Activated CD8-positive, alpha-beta T cell treated with anti-CD3 and anti-CD28 coated beads for 36 hours (primary cell): ENCODE measurements at regions of chr6 and their contacts with region 1.

Region 1: DNA sequence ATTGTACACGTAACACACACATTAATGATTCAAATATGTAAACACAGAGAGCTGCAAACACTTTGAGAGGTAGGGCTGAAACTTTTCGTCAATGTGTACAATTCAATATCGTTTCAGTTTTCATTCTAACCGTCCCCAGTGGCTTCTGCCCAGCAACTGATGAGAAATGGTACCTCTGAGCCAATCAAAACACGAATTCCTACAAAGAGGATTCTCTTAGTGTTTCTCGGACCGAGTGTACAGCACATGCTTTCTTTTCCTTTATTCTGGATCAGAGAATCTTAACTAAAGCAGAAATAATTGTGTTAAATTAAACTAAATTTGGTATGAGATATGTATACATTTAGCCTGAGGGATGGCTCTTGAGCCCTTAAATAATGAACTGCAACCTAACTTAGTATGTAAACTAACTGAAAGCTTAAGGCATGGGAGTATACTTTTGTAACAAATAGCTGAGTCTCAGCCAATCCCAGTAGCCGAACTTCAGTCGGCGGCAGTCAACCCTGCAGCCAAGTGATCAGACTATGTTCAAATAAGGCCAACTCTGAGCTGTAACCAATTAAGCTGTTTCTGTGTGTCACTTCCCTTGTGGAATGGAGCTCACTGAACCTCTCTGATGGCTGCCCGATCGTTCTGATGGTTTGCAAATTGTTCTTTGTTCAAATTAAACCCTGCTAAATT is 16.1 kb downstream of the BTN2A1 start:
- DNase-seq: peak; percentile 88
- ATAC-seq: peak; percentile 91
- H3K4me3 Mint-ChIP-seq: peak overlapping the region; percentile 100
- H3K27ac Mint-ChIP-seq: peak overlapping the region; percentile 100
- H3K4me1 Mint-ChIP-seq: peaks cover 38% of the 10 kb centered on the region
- H3K27me3 Mint-ChIP-seq: no peaks in the 10 kb centered on the region
- CTCF ChIP-seq: no peak

Region 2: GRCh38 chr6:25913741-25914140 is 560.2 kb before region 1 on chr6:
- CTCF ChIA-PET with region 1: no interaction called
- POLR2A ChIA-PET with region 1: no interaction called
- intact Hi-C with region 1: no loop called
- DNase-seq: no peak
- ATAC-seq: no peak
- H3K4me3 Mint-ChIP-seq: no peak overlapping the region
- H3K27ac Mint-ChIP-seq: no peak overlapping the region
- H3K4me1 Mint-ChIP-seq: peaks cover 14% of the 10 kb centered on the region
- H3K27me3 Mint-ChIP-seq: peaks cover 2% of the 10 kb centered on the region
- CTCF ChIP-seq: no peak

Region 3: DNA sequence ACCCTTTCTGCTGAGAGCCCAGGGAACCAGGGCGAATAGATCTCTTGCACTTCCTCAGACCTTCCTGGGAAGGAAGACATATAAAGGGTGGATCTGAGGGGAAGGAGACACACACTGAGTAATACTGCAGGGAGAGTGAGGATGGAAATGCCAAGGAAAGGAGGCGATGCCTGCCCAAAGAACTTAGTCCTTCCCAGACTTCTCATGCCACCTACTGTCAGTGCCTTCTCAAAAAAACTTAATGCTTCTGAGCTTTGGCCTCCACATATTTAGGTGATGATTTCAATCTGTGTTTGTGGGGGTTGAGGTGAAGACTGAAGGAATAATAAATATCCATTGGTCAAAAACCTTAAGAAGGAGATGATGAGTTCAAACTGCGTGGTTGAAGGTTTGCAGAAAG is 62.1 kb before region 1 on chr6:
- CTCF ChIA-PET with region 1: no interaction called
- POLR2A ChIA-PET with region 1: no interaction called
- intact Hi-C with region 1: no loop called
- DNase-seq: no peak
- ATAC-seq: no peak
- H3K4me3 Mint-ChIP-seq: no peak overlapping the region
- H3K27ac Mint-ChIP-seq: peak overlapping the region; percentile 23
- H3K4me1 Mint-ChIP-seq: peaks cover 20% of the 10 kb centered on the region
- H3K27me3 Mint-ChIP-seq: no peaks in the 10 kb centered on the region
- CTCF ChIP-seq: no peak

Region 4: GRCh38 chr6:26485112-26485780 is 11.3 kb after region 1 on chr6:
- CTCF ChIA-PET with region 1: interaction called, 7 read pairs
- POLR2A ChIA-PET with region 1: interaction called, 12 read pairs
- intact Hi-C with region 1: no loop called
- DNase-seq: no peak
- ATAC-seq: no peak
- H3K4me3 Mint-ChIP-seq: no peak overlapping the region
- H3K27ac Mint-ChIP-seq: no peak overlapping the region
- H3K4me1 Mint-ChIP-seq: no peaks in the 10 kb centered on the region
- H3K27me3 Mint-ChIP-seq: no peaks in the 10 kb centered on the region
- CTCF ChIP-seq: no peak

Region 5: GRCh38 chr6:26532699-26533531 is 59.0 kb after region 1 on chr6:
- CTCF ChIA-PET with region 1: no interaction called
- POLR2A ChIA-PET with region 1: interaction called, 9 read pairs
- intact Hi-C with region 1: loop called (anchors 5 kb)
- DNase-seq: peak; percentile 97
- ATAC-seq: peak; percentile 41
- H3K4me3 Mint-ChIP-seq: peak overlapping the region; percentile 86
- H3K27ac Mint-ChIP-seq: peak overlapping the region; percentile 88
- H3K4me1 Mint-ChIP-seq: peaks cover 42% of the 10 kb centered on the region
- H3K27me3 Mint-ChIP-seq: peaks cover 1% of the 10 kb centered on the region
- CTCF ChIP-seq: no peak

Region 6: DNA sequence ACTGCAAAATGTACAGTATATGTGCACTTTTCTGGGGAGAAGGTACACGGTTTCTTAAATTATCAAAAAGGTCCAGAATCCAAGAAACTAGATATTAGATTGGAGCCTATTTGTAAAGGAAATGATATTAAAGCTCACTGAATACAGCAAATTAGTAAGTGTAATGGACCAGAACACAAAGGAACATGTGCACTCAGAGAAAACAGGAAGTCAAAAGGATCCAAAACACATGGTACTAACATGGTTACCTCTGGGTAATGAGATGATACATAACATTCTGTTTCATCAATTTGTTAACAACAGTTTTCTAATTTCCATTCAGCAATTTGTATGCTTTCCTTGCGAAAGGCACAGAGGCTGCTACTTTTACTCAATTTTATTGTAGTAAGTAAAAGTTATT is 166.9 kb after region 1 on chr6:
- CTCF ChIA-PET with region 1: no interaction called
- POLR2A ChIA-PET with region 1: no interaction called
- intact Hi-C with region 1: no loop called
- DNase-seq: no peak
- ATAC-seq: no peak
- H3K4me3 Mint-ChIP-seq: no peak overlapping the region
- H3K27ac Mint-ChIP-seq: no peak overlapping the region
- H3K4me1 Mint-ChIP-seq: no peaks in the 10 kb centered on the region
- H3K27me3 Mint-ChIP-seq: no peaks in the 10 kb centered on the region
- CTCF ChIP-seq: no peak